Activated naive CD4-positive, alpha-beta T cell treated with anti-CD3 and anti-CD28 coated beads, Interleukin-2, amount 10 ng/mL, durations not matched to agents 7 days and 5 days (primary cell): ENCODE measurements at regions of chr20 and their contacts with region 1.

Region 1: GRCh38 chr20:59177261-59178250 is 13.9 kb downstream of the ZNF831 start:
- DNase-seq: peak; percentile 56
- H3K4me3 Mint-ChIP-seq: peak overlapping the region; percentile 21
- H3K27ac Mint-ChIP-seq: peak overlapping the region; percentile 95
- H3K4me1 Mint-ChIP-seq: peaks cover 70% of the 10 kb centered on the region
- H3K27me3 Mint-ChIP-seq: no peaks in the 10 kb centered on the region

Region 2: GRCh38 chr20:58690396-58691135 is 487.0 kb before region 1 on chr20:
- CTCF ChIA-PET with region 1: no interaction called
- DNase-seq: no peak
- H3K4me3 Mint-ChIP-seq: peak overlapping the region; percentile 12
- H3K27ac Mint-ChIP-seq: peak overlapping the region; percentile 29
- H3K4me1 Mint-ChIP-seq: peaks cover 22% of the 10 kb centered on the region
- H3K27me3 Mint-ChIP-seq: no peaks in the 10 kb centered on the region

Region 3: DNA sequence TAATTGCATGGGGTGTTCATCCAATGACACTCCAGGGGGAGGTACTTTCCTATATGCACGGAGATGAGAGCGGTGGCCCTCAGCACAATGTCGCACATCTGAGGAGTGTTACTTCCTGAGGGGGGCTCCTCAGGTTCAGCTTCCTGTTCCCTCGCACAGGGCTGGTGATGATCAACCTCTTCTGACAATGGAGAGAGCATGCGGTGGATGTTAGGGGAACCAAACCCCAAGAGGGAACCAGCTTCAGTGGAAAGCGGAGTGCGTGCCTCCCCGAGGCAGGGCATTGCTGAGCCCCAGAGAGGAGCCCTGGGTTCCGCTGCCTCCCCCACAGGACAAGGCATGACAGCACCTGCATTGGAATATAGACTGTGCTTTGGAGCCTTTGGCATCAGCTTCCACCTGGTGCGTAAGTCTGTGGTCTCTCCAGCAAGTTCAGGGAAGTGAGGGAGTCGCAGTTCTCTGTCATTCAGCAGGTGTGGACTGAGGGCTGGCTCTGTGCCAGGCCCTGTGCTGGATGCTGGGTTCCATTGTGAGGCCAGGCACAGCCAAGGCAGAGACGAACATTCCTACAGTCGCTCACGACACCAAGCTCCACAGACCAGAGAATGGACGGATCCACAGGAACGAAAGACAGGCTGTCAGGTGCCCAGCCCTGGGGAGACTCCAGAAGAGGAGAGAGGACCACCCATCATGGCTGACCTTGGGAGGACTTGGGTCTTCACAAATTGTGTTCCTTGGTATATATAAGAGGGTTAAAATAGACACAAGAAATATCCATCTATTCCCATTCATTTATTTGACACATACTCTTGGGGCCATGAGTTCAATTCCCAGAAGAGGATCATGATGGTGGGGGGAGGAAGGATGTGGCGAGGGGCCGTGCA is 17.8 kb before region 1 on chr20:
- CTCF ChIA-PET with region 1: interaction called, 16 read pairs
- DNase-seq: peak; percentile 75
- H3K4me3 Mint-ChIP-seq: peak overlapping the region; percentile 82
- H3K27ac Mint-ChIP-seq: peak overlapping the region; percentile 95
- H3K4me1 Mint-ChIP-seq: peaks cover 74% of the 10 kb centered on the region
- H3K27me3 Mint-ChIP-seq: peaks cover under 1% of the 10 kb centered on the region